ENCODE measurements at regions of chr9 and their contacts with region 1.

Region 1: DNA sequence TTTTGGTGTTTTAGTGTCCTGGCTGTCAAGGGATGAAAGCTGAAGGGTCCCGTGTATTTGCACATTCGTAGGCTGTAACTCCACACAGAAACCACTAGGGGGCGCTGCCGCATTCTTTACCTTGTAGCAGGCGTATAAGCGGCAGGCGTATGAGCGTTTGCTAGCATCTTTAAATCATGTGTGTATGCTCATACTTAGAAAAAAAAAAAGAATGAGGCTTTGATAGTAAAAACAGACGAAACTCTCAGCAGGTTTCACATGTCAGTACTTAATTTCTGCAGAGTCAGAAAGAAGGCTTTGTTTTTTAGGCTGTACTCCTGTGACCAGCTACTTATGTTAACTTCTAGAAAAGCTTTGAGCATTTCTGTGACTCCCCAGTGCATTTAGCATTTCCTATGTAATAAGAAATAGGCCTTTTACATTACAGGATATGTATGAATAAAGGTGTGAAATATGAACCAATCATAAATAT is 218.8 kb upstream of the ADAMTSL1 start:
- DNase-seq: peak; percentile 48 to 97 (median 82)

Region 2: DNA sequence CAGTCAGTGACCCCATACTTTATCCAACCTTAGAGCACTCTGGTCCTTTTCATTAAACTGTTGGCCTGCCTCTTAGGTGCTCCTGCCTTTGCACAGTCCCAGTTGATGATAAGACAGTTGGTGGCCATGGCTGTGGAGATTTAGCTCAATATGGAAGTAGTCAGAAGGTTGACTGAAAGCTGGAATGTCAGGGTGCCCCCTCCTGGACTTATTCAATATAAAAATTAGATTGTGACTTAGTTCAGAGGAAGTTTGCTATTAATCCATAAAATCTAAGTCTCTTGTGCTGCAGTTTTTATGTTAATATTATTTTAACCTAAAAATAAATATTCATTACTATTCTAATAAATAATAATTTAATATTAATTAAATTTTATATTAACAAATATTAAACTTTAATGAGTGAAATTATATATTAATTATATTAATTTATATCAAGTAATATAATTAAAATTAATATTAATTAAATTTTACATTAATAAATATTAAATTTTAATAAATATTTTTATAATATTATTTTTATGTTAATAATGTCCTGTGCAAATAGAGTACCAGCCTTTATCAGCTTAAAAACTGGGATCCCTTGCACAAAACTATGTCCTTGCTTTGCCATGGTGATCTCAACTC is 141.0 kb after region 1 on chr9:
- intact Hi-C with region 1: loop called (anchors 2 kb)
- DNase-seq: no peak

Region 3: GRCh38 chr9:18442629-18443491 is 187.7 kb after region 1 on chr9:
- intact Hi-C with region 1: loop called (anchors 1 kb)
- DNase-seq: peak; percentile 34 to 96 (median 78)

Region 4: GRCh38 chr9:19018201-19018600 is 763.0 kb after region 1 on chr9:
- intact Hi-C with region 1: loop called (anchors 5 kb)
- DNase-seq: no peak

Measured in posterior cingulate gyrus (tissue), 11 donors.